ENCODE measurements at regions of chr4 and their contacts with region 1.

Region 1: GRCh38 chr4:145936142-145936996 is 2.3 kb downstream of the ZNF827 start:
- DNase-seq: peak; percentile 41 to 88 (median 70)
- ATAC-seq: peak; percentile 51
- H3K4me3 ChIP-seq: peak overlapping the region; percentile 83 to 84
- H3K4me3 Mint-ChIP-seq: peak overlapping the region; percentile 94
- H3K27ac ChIP-seq: peak overlapping the region; percentile 58 to 63
- H3K27ac Mint-ChIP-seq: peak overlapping the region; percentile 97
- H3K4me1 ChIP-seq: peaks cover 28% of the 10 kb centered on the region
- H3K4me1 Mint-ChIP-seq: peaks cover 47% of the 10 kb centered on the region
- H3K27me3 ChIP-seq: no peaks in the 10 kb centered on the region
- H3K27me3 Mint-ChIP-seq: no peaks in the 10 kb centered on the region
- CTCF ChIP-seq: peak; percentile 27

Region 2: DNA sequence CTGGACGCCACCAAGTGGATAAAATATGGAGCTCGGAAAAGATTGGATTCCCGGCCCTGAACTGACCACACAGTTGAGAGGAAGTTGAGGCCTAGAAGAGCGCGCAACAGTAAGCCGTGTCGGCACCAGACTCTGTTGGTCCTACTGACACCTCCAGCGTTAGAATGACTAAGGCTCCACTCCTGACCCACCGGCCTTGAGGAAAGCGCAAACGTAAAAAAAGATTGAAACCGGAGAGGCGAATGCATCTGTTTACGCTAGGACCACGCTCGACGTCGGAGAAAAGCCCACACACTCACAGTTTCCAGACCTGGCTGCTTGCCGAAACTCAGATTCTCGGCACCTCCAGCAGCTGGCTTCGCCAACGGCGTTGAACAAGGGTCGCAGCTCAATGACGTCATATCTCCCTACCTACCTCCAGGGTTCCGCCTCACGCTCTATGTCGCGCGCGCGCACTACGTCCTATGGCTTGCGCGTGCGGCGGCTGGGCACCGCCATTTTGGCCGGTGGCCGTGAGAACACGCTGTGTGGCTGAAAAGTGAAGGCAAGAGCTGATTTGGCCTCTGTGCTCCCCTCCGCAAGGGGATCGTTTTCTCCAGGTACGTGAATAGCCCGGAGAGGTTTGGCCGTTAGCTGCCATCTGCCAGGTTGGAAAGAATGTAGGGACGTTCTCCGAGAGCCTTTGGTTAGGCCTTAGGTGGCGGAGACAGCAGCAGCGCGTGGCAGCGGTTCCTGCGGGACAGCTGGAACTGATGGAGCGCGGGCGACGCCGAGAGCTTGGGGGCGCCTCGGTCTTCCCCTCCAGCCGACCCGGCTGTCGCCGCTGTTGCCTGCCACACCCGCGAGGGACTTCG is 838.3 kb before region 1 on chr4 and contains the starts of genes ABCE1 and ANAPC10:
- CTCF ChIA-PET with region 1: no interaction called
- POLR2A ChIA-PET with region 1: no interaction called
- intact Hi-C with region 1: loop called (anchors 5 to 10 kb)
- DNase-seq: peak; percentile 84 to 99 (median 97)
- ATAC-seq: peak; percentile 89
- H3K4me3 ChIP-seq: peak within 1 kb of the TSS; percentile 70 to 81
- H3K4me3 Mint-ChIP-seq: peak within 1 kb of the TSS; percentile 95
- H3K27ac ChIP-seq: peak within 1 kb of the TSS; percentile 88 to 91
- H3K27ac Mint-ChIP-seq: peak within 1 kb of the TSS; percentile 98
- H3K4me1 ChIP-seq: peaks cover 41% of the 10 kb centered on the region
- H3K4me1 Mint-ChIP-seq: peaks cover 46% of the 10 kb centered on the region
- H3K27me3 ChIP-seq: no peaks in the 10 kb centered on the region
- H3K27me3 Mint-ChIP-seq: no peaks in the 10 kb centered on the region
- CTCF ChIP-seq: no peak
- total RNA-seq, gene ABCE1: 68.8 to 70.9 TPM
- total RNA-seq, gene ANAPC10: 24.5 to 26.7 TPM

Region 3: DNA sequence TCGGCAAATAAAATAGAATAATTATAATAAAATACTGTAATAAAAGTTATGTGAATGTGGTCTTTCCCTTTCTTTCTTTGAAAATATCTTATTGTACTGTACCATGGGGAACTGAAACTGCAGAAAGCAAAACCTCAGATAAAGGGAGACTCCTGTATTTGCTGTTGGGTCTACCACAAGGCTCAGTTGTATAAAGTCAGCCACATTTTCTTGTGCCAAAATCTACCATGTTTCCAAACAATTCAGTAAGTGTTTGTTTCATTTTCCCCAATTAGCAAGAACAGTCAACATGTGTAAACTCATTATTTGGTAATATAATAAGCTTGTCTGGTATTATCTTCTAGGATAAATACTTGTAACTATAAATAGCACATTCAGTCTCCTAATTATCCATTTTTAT is 741.2 kb before region 1 on chr4:
- CTCF ChIA-PET with region 1: no interaction called
- POLR2A ChIA-PET with region 1: no interaction called
- intact Hi-C with region 1: no loop called
- DNase-seq: no peak
- ATAC-seq: no peak
- H3K4me3 ChIP-seq: no peak overlapping the region
- H3K4me3 Mint-ChIP-seq: no peak overlapping the region
- H3K27ac ChIP-seq: no peak overlapping the region
- H3K27ac Mint-ChIP-seq: no peak overlapping the region
- H3K4me1 ChIP-seq: no peaks in the 10 kb centered on the region
- H3K4me1 Mint-ChIP-seq: no peaks in the 10 kb centered on the region
- H3K27me3 ChIP-seq: no peaks in the 10 kb centered on the region
- H3K27me3 Mint-ChIP-seq: peaks cover 10% of the 10 kb centered on the region
- CTCF ChIP-seq: no peak

Region 4: DNA sequence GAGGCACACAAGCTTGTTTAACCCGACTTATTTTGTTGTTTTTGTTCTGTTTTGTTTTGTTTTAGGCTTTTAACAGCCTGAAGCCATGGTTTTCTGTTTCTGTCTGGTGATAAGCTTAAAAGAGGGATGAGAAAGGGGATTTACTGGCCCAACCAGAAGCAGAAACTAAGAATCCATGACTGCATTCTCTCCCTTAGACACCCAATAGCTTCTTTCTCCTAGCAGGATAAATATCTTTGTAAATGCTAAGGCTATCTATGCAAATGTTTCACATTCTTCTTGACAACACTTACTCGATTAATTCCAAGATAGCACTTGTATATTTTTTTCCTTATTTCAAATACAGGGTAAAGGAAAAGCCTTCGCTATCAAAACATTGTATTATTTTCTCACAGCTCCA is 508.4 kb before region 1 on chr4:
- CTCF ChIA-PET with region 1: no interaction called
- POLR2A ChIA-PET with region 1: no interaction called
- intact Hi-C with region 1: no loop called
- DNase-seq: no peak
- ATAC-seq: no peak
- H3K4me3 ChIP-seq: no peak overlapping the region
- H3K4me3 Mint-ChIP-seq: no peak overlapping the region
- H3K27ac ChIP-seq: no peak overlapping the region
- H3K27ac Mint-ChIP-seq: no peak overlapping the region
- H3K4me1 ChIP-seq: no peaks in the 10 kb centered on the region
- H3K4me1 Mint-ChIP-seq: no peaks in the 10 kb centered on the region
- H3K27me3 ChIP-seq: peaks cover 0 to 5% of the 10 kb centered on the region in 2 experiments
- H3K27me3 Mint-ChIP-seq: peaks cover 7% of the 10 kb centered on the region
- CTCF ChIP-seq: no peak

Region 5: DNA sequence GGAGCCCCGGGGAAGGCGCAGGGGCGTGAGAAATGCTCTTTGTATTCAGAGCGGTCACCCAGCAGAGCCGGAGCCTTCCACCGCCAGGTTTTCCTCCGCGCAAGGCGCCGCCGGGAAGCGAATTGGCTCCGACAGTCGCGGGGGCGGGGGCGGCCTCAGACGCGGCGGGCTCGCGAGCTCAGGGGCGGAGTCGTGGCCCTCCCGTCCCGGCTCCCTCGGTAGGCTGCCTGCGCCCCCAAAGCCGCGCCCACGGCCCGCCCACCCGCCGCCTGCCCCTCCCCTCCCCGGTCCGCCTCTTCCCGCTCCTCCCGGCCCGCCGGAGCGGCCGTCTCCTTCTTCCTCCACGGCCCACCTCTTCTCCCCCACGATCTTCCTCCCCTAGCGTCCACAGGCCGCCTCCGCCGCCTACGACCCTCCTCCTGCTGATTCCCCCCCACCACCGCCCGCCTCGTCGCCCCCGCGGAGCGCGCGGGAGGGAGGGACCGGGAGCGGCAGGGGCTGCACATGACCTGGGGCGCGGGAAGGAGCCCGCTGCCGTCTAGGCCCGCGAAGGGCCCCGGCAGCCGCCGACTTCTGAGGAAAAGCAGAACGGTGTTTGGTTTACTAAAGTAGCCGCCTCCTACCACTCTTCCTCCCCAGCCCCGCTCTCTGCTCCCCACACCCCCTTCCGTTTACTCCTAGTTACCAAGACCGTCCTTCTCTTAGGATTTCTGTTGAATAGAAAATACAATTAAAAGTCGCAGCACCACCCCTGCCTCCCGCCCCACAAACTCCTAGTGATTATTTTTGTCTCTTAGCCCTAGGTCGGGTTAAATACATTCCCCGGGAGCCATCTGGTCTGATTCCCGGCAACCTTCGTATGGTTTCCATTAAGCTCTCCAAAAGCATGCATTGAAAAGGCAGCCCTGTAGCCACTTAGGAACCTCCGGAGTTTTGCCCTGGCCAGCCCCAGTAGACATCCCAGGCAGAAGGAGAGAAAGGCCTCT is 203.2 kb before region 1 on chr4:
- CTCF ChIA-PET with region 1: no interaction called
- POLR2A ChIA-PET with region 1: no interaction called
- intact Hi-C with region 1: loop called (anchors 1 to 5 kb)
- DNase-seq: peak; percentile 58 to 92 (median 83)
- ATAC-seq: peak; percentile 98
- H3K4me3 ChIP-seq: peak overlapping the region; percentile 71 to 73
- H3K4me3 Mint-ChIP-seq: peak overlapping the region; percentile 80
- H3K27ac ChIP-seq: peak overlapping the region in 1 of 2 experiments; percentile 45
- H3K27ac Mint-ChIP-seq: peak overlapping the region; percentile 29
- H3K4me1 ChIP-seq: peaks cover 3% of the 10 kb centered on the region
- H3K4me1 Mint-ChIP-seq: peaks cover 9% of the 10 kb centered on the region
- H3K27me3 ChIP-seq: no peaks in the 10 kb centered on the region
- H3K27me3 Mint-ChIP-seq: peaks cover 4% of the 10 kb centered on the region
- CTCF ChIP-seq: no peak

Region 6: DNA sequence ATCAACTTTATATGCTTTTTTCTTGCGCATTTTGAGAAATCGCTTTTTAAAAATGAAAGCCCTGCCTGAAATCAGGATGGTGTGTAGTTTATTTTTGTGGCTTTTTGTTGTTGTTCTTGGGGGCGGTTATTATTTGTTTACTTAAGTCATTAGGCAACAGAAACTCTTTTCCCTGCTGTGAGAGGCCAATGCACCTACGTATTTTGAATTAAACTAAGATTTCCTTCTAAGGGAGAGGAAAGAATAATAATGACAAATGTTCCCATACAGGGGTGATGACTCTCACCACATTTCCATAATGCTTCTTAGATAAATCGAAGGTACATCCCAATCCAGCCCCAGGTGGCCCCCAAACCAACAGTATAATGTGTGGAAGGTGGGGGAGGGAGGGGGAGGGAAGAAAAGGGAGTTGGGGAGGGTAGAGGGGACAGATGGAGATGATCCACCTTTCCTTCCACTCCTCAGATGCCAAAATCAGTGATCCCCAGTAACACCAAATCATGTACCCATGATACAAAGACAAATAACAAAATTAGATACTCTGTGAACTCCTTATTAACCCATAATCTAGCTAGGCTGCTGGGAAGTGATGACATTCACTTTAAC is 37.3 kb before region 1 on chr4:
- CTCF ChIA-PET with region 1: interaction called, 4 read pairs
- POLR2A ChIA-PET with region 1: interaction called, 4 read pairs
- intact Hi-C with region 1: loop called in 1 of 2 experiments (anchors 5 kb)
- DNase-seq: no peak
- ATAC-seq: no peak
- H3K4me3 ChIP-seq: no peak overlapping the region
- H3K4me3 Mint-ChIP-seq: no peak overlapping the region
- H3K27ac ChIP-seq: no peak overlapping the region
- H3K27ac Mint-ChIP-seq: peak overlapping the region; percentile 4
- H3K4me1 ChIP-seq: peaks cover 23% of the 10 kb centered on the region
- H3K4me1 Mint-ChIP-seq: peaks cover 67% of the 10 kb centered on the region
- H3K27me3 ChIP-seq: no peaks in the 10 kb centered on the region
- H3K27me3 Mint-ChIP-seq: no peaks in the 10 kb centered on the region
- CTCF ChIP-seq: no peak

Region 7: DNA sequence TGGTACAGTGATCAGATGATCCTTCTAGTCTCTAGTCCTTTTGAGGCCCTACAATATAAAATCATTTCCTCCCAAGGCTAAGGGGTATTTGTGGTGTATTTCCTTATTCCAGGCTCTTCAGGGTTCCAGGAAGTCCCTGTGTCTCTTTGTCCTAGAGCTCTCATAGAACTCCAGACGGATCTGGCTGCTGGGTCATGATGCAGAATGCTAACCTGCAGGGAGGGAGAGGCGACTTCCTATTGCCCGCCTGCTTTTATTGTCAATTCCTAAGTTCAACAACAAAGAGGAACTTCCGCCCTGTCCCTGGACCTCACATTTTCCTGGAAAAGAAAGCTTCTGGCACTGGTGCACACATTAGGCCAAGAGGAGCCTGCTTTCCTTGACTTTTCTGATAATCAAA is 48.2 kb after region 1 on chr4:
- CTCF ChIA-PET with region 1: no interaction called
- POLR2A ChIA-PET with region 1: no interaction called
- intact Hi-C with region 1: no loop called
- DNase-seq: no peak
- ATAC-seq: no peak
- H3K4me3 ChIP-seq: no peak overlapping the region
- H3K4me3 Mint-ChIP-seq: no peak overlapping the region
- H3K27ac ChIP-seq: no peak overlapping the region
- H3K27ac Mint-ChIP-seq: no peak overlapping the region
- H3K4me1 ChIP-seq: no peaks in the 10 kb centered on the region
- H3K4me1 Mint-ChIP-seq: no peaks in the 10 kb centered on the region
- H3K27me3 ChIP-seq: no peaks in the 10 kb centered on the region
- H3K27me3 Mint-ChIP-seq: no peaks in the 10 kb centered on the region
- CTCF ChIP-seq: no peak

Region 8: DNA sequence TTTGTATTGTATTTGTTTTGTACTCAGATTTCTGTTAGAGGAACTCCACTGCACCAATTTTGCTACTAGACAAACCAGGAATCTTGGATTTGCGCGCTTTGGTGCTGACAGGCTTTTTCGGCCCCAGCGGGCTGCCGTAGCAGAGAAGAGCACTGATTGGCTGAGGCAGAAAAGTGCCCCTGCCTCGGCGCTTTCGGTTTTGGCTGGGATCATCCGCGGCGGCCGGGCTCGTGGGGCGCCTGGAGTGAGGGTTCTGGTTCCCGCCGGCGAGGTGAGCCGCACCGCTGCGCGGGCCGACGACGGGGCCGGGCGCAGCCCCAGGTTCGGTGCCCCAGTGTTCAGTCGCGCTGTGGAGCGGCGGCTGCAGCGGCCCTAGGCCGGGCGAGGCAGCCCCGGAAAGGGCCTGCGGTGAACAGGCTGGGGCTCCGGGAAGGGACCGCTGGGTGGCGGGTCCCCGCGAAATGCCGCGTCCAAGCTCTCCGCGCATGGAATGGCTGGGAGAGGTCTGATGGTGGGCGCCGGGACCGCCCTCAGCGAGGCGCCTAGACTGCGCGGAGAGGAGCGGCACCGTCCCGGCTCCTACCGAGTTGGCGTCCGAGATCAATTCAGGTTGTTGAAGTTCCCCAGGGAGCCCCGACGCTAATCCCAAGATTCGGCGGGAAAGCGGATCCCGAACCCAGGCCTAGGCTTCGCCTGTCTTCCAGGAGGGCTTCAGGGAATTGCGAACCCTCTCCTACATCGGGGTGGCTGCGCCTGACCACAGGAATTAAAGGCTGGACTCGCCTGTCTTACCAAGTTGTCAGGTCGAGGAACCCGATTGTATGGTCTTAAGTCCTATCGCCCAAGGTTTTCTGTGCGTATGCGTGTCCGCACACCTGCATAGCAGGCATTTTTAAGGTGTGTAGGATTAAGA is 239.4 kb after region 1 on chr4 and contains the start of gene LSM6:
- CTCF ChIA-PET with region 1: no interaction called
- POLR2A ChIA-PET with region 1: no interaction called
- intact Hi-C with region 1: loop called (anchors 1 to 2 kb)
- DNase-seq: peak; percentile 60 to 92 (median 79)
- ATAC-seq: peak; percentile 90
- H3K4me3 ChIP-seq: peak within 1 kb of the TSS; percentile 88 to 97
- H3K4me3 Mint-ChIP-seq: peak within 1 kb of the TSS; percentile 91
- H3K27ac ChIP-seq: peak within 1 kb of the TSS; percentile 69 to 83
- H3K27ac Mint-ChIP-seq: peak within 1 kb of the TSS; percentile 95
- H3K4me1 ChIP-seq: peaks cover 48% of the 10 kb centered on the region
- H3K4me1 Mint-ChIP-seq: peaks cover 59% of the 10 kb centered on the region
- H3K27me3 ChIP-seq: no peaks in the 10 kb centered on the region
- H3K27me3 Mint-ChIP-seq: no peaks in the 10 kb centered on the region
- CTCF ChIP-seq: no peak
- total RNA-seq, gene LSM6: 17.6 to 20.6 TPM

Region 9: GRCh38 chr4:147683717-147684700 is 1747.6 kb after region 1 on chr4 and contains the start of gene PRMT9:
- CTCF ChIA-PET with region 1: no interaction called
- POLR2A ChIA-PET with region 1: no interaction called
- intact Hi-C with region 1: loop called in 1 of 2 experiments (anchors 10 kb)
- DNase-seq: peak; percentile 74 to 94 (median 88)
- ATAC-seq: peak; percentile 97
- H3K4me3 ChIP-seq: peak within 1 kb of the TSS; percentile 68 to 98
- H3K4me3 Mint-ChIP-seq: peak within 1 kb of the TSS; percentile 98
- H3K27ac ChIP-seq: peak within 1 kb of the TSS; percentile 92 to 98
- H3K27ac Mint-ChIP-seq: peak within 1 kb of the TSS; percentile 99
- H3K4me1 ChIP-seq: peaks cover 11% of the 10 kb centered on the region
- H3K4me1 Mint-ChIP-seq: peaks cover 40% of the 10 kb centered on the region
- H3K27me3 ChIP-seq: no peaks in the 10 kb centered on the region
- H3K27me3 Mint-ChIP-seq: peaks cover 8% of the 10 kb centered on the region
- CTCF ChIP-seq: no peak
- total RNA-seq, gene PRMT9: 36.4 to 40.3 TPM

Measured in CD8-positive, alpha-beta T cell (primary cell).